ENCODE measurements at regions of chr1 and their contacts with region 1.

Region 1: DNA sequence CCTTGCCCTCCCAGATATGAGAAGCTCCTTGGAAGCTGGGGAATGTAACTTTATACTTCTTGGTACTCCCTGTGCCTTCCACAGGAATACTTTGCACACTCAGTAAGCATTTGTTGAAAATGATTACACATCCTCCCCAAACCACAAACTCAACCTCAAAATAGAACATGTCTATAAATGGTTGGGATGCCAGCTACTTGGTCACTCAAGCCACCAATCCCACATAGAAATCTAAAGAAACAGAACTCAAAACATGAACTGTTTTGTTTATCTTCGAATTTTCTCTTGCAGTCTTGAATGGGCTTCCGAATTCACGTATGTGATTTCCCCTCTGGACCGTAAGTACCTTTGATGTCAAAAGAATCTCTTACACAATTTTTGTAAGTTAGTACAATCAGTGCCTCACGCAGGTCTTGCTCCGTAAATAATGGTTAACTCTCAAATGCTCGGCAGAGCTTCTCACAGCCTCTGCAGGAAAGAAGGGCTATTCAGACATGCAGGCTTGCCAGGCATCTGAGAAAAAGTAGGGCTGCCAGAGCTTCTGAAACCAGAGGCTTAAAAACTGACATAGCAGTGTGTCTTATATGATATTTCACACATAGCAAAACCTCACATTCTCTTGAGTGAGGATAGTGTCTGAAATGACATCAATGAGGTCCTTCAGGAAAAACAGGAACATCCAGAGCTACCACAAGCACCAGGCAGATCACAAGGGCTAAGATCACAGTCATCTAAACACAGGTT is 26.8 kb downstream of the SORT1 start:
- DNase-seq: peak in 1 of 2 donors; percentile 69
- H3K4me3 ChIP-seq: peak overlapping the region; percentile 41 to 45
- H3K27ac ChIP-seq: peak overlapping the region; percentile 87 to 92
- H3K4me1 ChIP-seq: peaks cover 11 to 70% of the 10 kb centered on the region in 2 donors
- H3K27me3 ChIP-seq: no peaks in the 10 kb centered on the region
- CTCF ChIP-seq: no peak

Region 2: DNA sequence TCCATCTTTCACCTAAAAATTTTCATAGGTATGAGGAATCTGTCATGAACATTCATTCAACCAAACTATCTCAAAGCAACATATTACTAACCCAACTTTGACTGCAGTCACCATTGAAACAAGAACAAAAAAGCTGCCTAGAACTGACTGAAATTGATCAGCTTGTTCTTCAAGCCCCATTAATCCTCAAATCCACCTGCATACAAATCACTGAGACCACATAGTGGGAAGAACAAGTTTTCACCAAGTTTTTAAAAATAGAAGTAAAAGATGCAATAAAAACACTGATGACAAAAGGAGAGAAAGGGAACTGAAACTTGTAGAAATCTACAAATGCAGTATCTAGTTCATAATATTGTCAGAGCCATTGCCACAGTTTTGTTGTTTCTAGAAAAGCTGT is 20.7 kb after region 1 on chr1:
- intact Hi-C with region 1: loop called (anchors 1 kb)
- DNase-seq: no peak
- H3K4me3 ChIP-seq: peak overlapping the region; percentile 25 to 83
- H3K27ac ChIP-seq: peak overlapping the region; percentile 90 to 91
- H3K4me1 ChIP-seq: peaks cover 8 to 48% of the 10 kb centered on the region in 2 donors
- H3K27me3 ChIP-seq: no peaks in the 10 kb centered on the region
- CTCF ChIP-seq: no peak

Region 3: GRCh38 chr1:109493805-109494539 is 123.1 kb after region 1 on chr1 and contains the start of gene CYB561D1:
- intact Hi-C with region 1: no loop called
- DNase-seq: peak; percentile 35 to 92
- H3K4me3 ChIP-seq: peak within 1 kb of the TSS; percentile 61 to 89
- H3K27ac ChIP-seq: peak within 1 kb of the TSS; percentile 78 to 84
- H3K4me1 ChIP-seq: peaks cover 7 to 18% of the 10 kb centered on the region in 2 donors
- H3K27me3 ChIP-seq: no peaks in the 10 kb centered on the region
- CTCF ChIP-seq: peak; percentile 92 to 98 (median 95)
- total RNA-seq, gene CYB561D1: 26.8 TPM